Stomach (tissue), 19 donors: ENCODE measurements at regions of chr10 and their contacts with region 1.

Region 1: GRCh38 chr10:127906548-127907377 is at the start of gene PTPRE:
- DNase-seq: peak; percentile 83 to 91
- H3K4me3 ChIP-seq: peak within 1 kb of the TSS; percentile 68 to 83 (median 75)
- H3K27ac ChIP-seq: peak within 1 kb of the TSS; percentile 80 to 89 (median 81)
- H3K4me1 ChIP-seq: peaks cover 15 to 47% (median 31%) of the 10 kb centered on the region in 4 donors
- H3K27me3 ChIP-seq: peaks cover 0 to 19% (median 0%) of the 10 kb centered on the region in 3 donors
- CTCF ChIP-seq: peak in 5 of 7 experiments; percentile 49 to 94 (median 77)
- EP300 ChIP-seq: no peak
- POLR2A ChIP-seq: no peak
- total RNA-seq, gene PTPRE: 5.5 to 26.4 (median 13.2) TPM

Region 2: GRCh38 chr10:128009372-128010126 is 102.8 kb after region 1 on chr10:
- intact Hi-C with region 1: loop called (anchors 5 kb)
- DNase-seq: no peak
- H3K4me3 ChIP-seq: no peak overlapping the region
- H3K27ac ChIP-seq: peak overlapping the region in 2 of 5 donors; percentile 6 to 24
- H3K4me1 ChIP-seq: peaks cover 10 to 23% (median 11%) of the 10 kb centered on the region in 4 donors
- H3K27me3 ChIP-seq: peaks cover 0 to 11% (median 0%) of the 10 kb centered on the region in 3 donors
- CTCF ChIP-seq: no peak
- EP300 ChIP-seq: no peak
- POLR2A ChIP-seq: no peak

Region 3: GRCh38 chr10:128150045-128150493 is 243.3 kb after region 1 on chr10:
- intact Hi-C with region 1: no loop called
- DNase-seq: peak; percentile 68 to 93
- H3K4me3 ChIP-seq: peak overlapping the region; percentile 32 to 58 (median 48)
- H3K27ac ChIP-seq: no peak overlapping the region
- H3K4me1 ChIP-seq: peaks cover 6 to 14% (median 7%) of the 10 kb centered on the region in 4 donors
- H3K27me3 ChIP-seq: peaks cover 0 to 65% (median 14%) of the 10 kb centered on the region in 3 donors
- CTCF ChIP-seq: peak in 5 of 7 experiments; percentile 44 to 91 (median 66)
- EP300 ChIP-seq: no peak
- POLR2A ChIP-seq: no peak